Tibial artery (tissue), 4 donors: ENCODE measurements at regions of chr5 and their contacts with region 1.

Region 1: GRCh38 chr5:137248527-137248926 is 250.6 kb downstream of the SPOCK1 start:
- DNase-seq: no peak
- H3K4me3 ChIP-seq: no peak overlapping the region
- H3K27ac ChIP-seq: no peak overlapping the region
- H3K4me1 ChIP-seq: peaks cover 0 to 3% (median 0%) of the 10 kb centered on the region in 4 donors
- H3K27me3 ChIP-seq: no peaks in the 10 kb centered on the region
- CTCF ChIP-seq: no peak

Region 2: DNA sequence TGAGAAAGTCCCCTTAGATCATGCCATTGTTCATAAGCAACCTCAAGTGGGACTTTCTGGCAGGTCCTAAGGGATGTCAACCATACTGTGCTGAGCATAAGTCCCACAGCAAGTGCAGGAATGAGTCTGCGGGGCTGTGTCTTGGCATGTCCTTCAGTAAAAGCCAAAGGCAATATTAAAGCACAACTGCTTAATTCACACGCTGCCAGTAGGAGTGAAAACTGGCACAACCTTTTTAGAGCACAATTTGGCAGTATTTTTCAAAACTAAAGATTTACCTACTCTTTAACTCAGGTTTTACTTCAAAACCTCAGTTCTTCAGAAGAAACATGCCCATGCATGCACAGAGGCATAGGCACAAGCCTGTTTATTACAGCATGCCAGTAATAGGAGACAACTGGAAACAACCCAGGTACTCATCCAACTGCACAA is 1140.3 kb before region 1 on chr5:
- intact Hi-C with region 1: loop called (anchors 5 kb)
- DNase-seq: no peak
- H3K4me3 ChIP-seq: no peak overlapping the region
- H3K27ac ChIP-seq: no peak overlapping the region
- H3K4me1 ChIP-seq: peaks cover 0 to 16% (median 1%) of the 10 kb centered on the region in 4 donors
- H3K27me3 ChIP-seq: no peaks in the 10 kb centered on the region
- CTCF ChIP-seq: no peak